PC-9 (cell line): ENCODE measurements at regions of chr22 and their contacts with region 1.

Region 1: DNA sequence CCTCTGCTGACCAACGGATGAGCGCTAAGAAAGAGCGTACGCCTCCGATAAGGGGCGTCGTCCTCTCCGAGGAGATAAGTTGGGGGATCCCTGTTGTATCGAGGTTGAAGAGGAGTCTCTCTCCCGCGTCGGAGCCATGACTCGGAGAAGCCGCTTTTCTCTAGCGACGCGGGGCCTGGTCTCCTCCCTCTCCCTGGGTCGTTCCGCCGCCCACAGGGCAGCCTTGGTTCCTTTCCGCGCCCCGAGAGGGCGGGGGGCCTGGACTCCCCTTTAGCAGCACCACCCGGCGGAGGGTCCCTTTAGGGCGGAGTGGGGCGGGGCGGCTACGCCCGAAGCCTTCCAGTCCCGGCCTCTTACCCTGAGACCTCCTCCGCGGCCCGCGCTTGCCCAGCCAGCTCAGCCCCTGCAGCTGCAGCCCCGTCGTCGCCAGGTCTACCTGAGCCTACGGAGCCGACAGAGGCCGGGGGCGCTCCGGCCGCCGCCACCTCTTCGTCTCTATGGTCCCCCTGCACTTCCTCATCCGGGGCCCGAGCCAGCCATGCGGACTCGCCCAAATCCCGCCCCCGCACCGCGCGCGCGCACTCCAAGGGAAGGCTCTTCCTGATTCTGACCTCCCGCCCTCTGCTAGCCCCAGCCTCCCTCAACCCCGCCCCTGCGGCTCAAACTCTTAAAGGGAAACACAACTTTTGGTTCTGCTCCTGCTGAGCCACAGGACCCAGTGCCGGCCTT is at the start of gene PRR14L:
- DNase-seq: peak; percentile 87 to 98
- H3K4me3 ChIP-seq: peak within 1 kb of the TSS; percentile 86
- H3K27ac ChIP-seq: peak within 1 kb of the TSS; percentile 73
- H3K4me1 ChIP-seq: peaks cover 41% of the 10 kb centered on the region
- H3K27me3 ChIP-seq: no peaks in the 10 kb centered on the region
- CTCF ChIP-seq: no peak
- total RNA-seq, gene PRR14L: 43.9 and 46.1 TPM in 2 replicates

Region 2: DNA sequence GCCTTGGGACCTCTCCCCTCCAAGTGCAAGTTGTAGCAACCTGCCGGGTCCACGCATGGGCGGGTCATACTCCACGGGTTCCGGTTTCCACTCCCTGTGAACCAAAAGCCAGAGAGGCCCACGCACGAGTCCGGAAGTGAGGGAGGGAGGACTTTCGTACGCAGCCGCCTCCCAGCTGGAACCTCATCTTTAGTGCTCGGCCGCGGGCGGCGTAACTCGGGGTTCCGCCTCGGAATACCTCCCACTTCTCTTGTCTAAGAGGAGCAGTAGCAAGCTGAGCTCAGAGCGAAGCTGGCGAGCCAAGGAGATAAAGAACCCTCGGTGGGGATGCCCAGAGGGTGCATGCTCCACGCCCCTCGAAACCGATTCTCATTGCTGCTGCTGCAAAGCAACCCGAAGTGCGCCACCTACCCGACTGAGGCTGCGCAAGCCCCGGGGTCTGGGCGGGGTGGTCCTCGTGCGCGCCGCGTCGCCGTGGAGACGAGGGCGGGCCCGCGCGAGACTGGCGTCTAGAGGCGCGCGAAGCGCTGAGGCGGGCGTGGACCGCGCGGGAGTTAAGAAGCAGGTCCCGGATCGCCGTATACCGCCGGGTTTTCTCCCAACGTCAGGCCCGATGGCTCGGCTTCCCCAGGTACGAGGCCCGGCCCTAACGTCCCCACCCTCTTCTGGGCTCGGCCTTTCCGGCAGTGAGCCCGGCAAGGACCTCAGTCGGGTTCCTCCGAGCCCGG is 253.6 kb before region 1 on chr22 and contains the start of gene SFI1:
- CTCF ChIA-PET with region 1: no interaction called
- POLR2A ChIA-PET with region 1: no interaction called
- intact Hi-C with region 1: loop called (anchors 1 kb)
- DNase-seq: peak; percentile 76 to 93
- H3K4me3 ChIP-seq: peak within 1 kb of the TSS; percentile 81
- H3K27ac ChIP-seq: peak within 1 kb of the TSS; percentile 52
- H3K4me1 ChIP-seq: peaks cover 13% of the 10 kb centered on the region; the same call in 1 of the 2 replicates
- H3K27me3 ChIP-seq: no peaks in the 10 kb centered on the region
- CTCF ChIP-seq: no peak; the same call in 1 of the 2 replicates
- total RNA-seq, gene SFI1: 57.9 and 58.7 TPM in 2 replicates

Region 3: DNA sequence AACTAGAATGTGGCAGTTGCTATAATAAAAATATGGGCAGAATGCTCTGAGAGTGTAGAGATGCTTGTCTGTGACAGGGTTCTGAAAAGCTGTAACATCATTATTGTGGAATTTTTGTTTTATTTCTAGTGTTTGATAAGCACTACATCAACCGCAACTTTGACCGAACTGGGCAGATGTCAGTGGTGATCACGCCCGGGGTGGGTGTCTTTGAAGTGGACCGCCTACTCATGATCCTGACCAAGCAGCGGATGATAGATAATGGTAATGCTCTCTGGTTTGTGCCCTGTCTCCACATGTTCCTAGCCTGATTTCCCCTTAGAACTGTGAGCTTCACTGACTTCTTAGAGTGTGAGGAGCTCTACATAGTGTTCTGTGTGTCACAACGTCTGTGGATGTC is 52.8 kb after region 1 on chr22:
- CTCF ChIA-PET with region 1: no interaction called
- POLR2A ChIA-PET with region 1: no interaction called
- intact Hi-C with region 1: loop called (anchors 1 kb)
- DNase-seq: no peak
- H3K4me3 ChIP-seq: no peak overlapping the region
- H3K27ac ChIP-seq: no peak overlapping the region
- H3K4me1 ChIP-seq: peaks cover 17% of the 10 kb centered on the region
- H3K27me3 ChIP-seq: no peaks in the 10 kb centered on the region
- CTCF ChIP-seq: no peak

Region 4: DNA sequence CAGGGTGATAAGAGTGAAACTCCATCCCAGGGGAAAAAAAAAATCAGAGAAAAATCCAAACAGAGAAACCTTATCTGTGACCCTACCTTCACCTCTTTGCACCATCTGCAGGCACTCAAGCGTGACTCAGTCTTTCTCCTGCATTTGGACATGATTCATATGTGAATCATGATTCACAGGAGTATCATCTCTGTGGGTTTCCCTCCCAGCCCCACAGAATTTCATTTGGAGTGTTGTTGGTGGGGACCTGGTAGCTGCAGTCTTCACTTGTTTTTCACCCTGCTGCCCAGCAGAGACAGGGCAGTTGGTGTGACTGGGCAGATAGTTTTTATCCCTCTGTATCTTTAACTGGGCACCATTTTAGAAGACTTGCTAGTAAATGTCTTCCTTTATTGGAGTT is 79.7 kb after region 1 on chr22:
- CTCF ChIA-PET with region 1: no interaction called
- POLR2A ChIA-PET with region 1: no interaction called
- intact Hi-C with region 1: loop called (anchors 5 kb)
- DNase-seq: peak; percentile 72 to 94
- H3K4me3 ChIP-seq: no peak overlapping the region
- H3K27ac ChIP-seq: peak overlapping the region; percentile 92
- H3K4me1 ChIP-seq: peaks cover 24% of the 10 kb centered on the region
- H3K27me3 ChIP-seq: no peaks in the 10 kb centered on the region
- CTCF ChIP-seq: no peak

Region 5: DNA sequence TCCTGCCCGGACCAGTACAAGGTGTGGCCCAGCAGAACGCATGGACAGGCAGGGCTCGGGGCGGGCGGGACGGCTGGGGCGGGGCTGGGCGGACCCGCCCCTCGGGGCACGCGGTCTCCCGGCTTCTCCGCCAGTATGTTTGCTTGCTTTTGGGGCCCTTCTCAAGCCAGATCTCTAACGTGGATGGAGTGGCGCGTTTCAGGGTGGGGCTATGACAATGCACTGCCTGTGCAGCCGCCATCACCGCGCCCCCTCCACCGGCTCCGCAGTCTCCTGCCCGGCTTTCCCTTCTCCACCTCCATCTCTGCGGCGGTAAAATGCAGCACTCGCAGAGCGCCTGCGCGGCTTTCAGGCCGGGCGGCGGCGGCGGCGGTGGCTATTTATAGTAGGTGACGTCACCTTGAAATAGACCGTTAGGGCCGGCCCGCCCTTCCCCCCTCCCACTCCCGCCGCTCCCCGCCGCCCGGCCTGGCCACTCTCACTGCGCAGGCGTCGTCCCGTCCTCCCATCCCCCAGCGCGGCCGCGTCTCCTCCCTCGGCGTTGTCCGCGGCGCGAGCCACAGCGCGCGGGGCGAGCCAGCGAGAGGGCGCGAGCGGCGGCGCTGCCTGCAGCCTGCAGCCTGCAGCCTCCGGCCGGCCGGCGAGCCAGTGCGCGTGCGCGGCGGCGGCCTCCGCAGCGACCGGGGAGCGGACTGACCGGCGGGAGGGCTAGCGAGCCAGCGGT is 194.3 kb after region 1 on chr22 and contains the start of gene YWHAH:
- CTCF ChIA-PET with region 1: no interaction called
- POLR2A ChIA-PET with region 1: no interaction called
- intact Hi-C with region 1: loop called (anchors 5 kb)
- DNase-seq: peak; percentile 76 to 95
- H3K4me3 ChIP-seq: peak within 1 kb of the TSS; percentile 99
- H3K27ac ChIP-seq: peak within 1 kb of the TSS; percentile 53
- H3K4me1 ChIP-seq: peaks cover 20% of the 10 kb centered on the region
- H3K27me3 ChIP-seq: no peaks in the 10 kb centered on the region
- CTCF ChIP-seq: no peak
- total RNA-seq, gene YWHAH: 131 and 132 TPM in 2 replicates